Thyroid gland (tissue), 4 donors: ENCODE measurements at regions of chr19 and their contacts with region 1.

Region 1: DNA sequence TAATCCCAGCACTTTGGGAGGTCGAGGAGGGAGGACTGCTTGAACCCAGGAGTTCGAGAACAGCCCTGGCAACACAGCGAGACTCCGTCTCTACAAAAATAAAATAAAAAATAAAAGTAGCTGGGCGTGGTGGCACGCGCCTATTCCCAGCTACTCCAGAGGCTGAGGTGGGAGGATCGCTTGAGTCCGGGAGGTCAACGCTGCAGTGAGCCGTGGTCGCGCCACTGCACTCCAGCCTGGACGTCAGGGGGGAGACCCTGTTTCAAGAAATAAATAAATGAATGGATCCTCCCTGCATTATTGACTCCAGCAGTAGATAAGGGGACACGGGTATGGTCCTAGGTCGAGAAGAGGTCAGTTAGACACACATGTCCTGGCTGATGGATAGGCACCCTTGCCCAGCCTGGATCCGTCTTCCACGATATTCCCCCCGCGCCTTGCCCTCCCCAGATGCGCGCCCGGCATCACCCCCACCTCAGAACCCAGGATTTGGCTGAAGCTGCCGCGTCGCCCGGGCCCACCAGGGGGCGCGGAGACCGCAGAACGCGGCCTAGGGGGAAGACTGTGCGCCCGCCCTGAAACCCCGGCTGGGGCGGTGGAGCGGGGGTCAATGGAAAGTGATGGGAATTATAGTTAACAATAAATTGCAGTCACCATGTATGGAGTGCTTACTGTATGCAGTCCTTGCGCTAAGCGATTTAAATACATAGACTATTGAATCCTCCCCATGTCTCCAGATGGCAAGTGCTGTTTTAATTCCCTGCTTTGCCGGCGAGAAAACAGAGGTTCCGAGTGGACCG is 2.1 kb upstream of the HOOK2 start:
- DNase-seq: peak; percentile 76 to 80
- H3K4me3 ChIP-seq: peak overlapping the region; percentile 25 to 69 (median 65)
- H3K27ac ChIP-seq: peak overlapping the region; percentile 92 to 98 (median 98)
- H3K4me1 ChIP-seq: peaks cover 23 to 36% of the 10 kb centered on the region in 2 donors
- H3K27me3 ChIP-seq: no peaks in the 10 kb centered on the region
- CTCF ChIP-seq: peak; percentile 78 to 97 (median 92)
- POLR2A ChIP-seq: peak in 1 of 2 donors; percentile 5

Region 2: GRCh38 chr19:12838182-12838885 is 60.9 kb after region 1 on chr19 and contains the start of gene MAST1:
- intact Hi-C with region 1: loop called (anchors 5 kb)
- DNase-seq: peak; percentile 15 to 26
- H3K4me3 ChIP-seq: no peak within 1 kb of the TSS
- H3K27ac ChIP-seq: no peak within 1 kb of the TSS
- H3K4me1 ChIP-seq: peaks cover 10 to 18% of the 10 kb centered on the region in 2 donors
- H3K27me3 ChIP-seq: peaks cover 60% of the 10 kb centered on the region
- CTCF ChIP-seq: peak in 3 of 6 experiments; percentile 36 to 70 (median 41)
- POLR2A ChIP-seq: no peak
- total RNA-seq, gene MAST1: 0.56 TPM in 1 of 4 donors, not detected in the others